ENCODE measurements at regions of chr16 and their contacts with region 1.

Region 1: GRCh38 chr16:17377360-17378324 is 93.1 kb downstream of the XYLT1 start:
- DNase-seq: no peak
- ATAC-seq: peak; percentile 85
- H3K4me3 Mint-ChIP-seq: peak overlapping the region; percentile 56
- H3K27ac Mint-ChIP-seq: peak overlapping the region; percentile 88
- H3K4me1 Mint-ChIP-seq: peaks cover 78% of the 10 kb centered on the region
- H3K27me3 Mint-ChIP-seq: no peaks in the 10 kb centered on the region
- CTCF ChIP-seq: no peak

Region 2: DNA sequence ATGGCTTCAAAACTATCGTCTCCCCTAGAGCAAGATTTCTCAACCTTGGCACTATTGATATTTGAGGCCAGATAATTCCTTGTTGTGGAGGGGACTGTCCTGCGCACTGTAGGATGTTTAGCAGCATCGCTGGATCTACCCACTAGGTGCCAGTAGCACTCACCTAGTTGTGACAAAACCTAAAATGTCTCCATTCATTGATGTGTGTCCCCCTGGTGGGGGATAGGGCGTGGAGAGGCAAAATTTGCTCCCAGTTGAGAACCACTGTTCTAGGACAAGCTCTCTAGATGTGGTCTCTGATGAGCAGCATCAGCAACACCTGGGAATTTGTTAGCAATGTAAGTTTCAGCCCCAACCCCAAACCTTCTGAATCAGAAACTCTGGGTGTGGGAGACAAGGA is 165.8 kb before region 1 on chr16:
- CTCF ChIA-PET with region 1: no interaction called
- POLR2A ChIA-PET with region 1: no interaction called
- intact Hi-C with region 1: loop called (anchors 1 kb)
- DNase-seq: no peak
- ATAC-seq: peak; percentile 34
- H3K4me3 Mint-ChIP-seq: no peak overlapping the region
- H3K27ac Mint-ChIP-seq: no peak overlapping the region
- H3K4me1 Mint-ChIP-seq: peaks cover 10% of the 10 kb centered on the region
- H3K27me3 Mint-ChIP-seq: no peaks in the 10 kb centered on the region
- CTCF ChIP-seq: no peak

Region 3: GRCh38 chr16:17301593-17302135 is 76.0 kb before region 1 on chr16:
- CTCF ChIA-PET with region 1: interaction called, 16 read pairs
- POLR2A ChIA-PET with region 1: interaction called, 29 read pairs
- intact Hi-C with region 1: loop called (anchors 1 kb)
- DNase-seq: peak; percentile 62
- ATAC-seq: peak; percentile 86
- H3K4me3 Mint-ChIP-seq: peak overlapping the region; percentile 58
- H3K27ac Mint-ChIP-seq: peak overlapping the region; percentile 85
- H3K4me1 Mint-ChIP-seq: peaks cover 71% of the 10 kb centered on the region
- H3K27me3 Mint-ChIP-seq: no peaks in the 10 kb centered on the region
- CTCF ChIP-seq: no peak

Region 4: GRCh38 chr16:17395849-17396480 is 18.3 kb after region 1 on chr16:
- CTCF ChIA-PET with region 1: no interaction called
- POLR2A ChIA-PET with region 1: no interaction called
- intact Hi-C with region 1: loop called (anchors 2 kb)
- DNase-seq: no peak
- ATAC-seq: no peak
- H3K4me3 Mint-ChIP-seq: no peak overlapping the region
- H3K27ac Mint-ChIP-seq: no peak overlapping the region
- H3K4me1 Mint-ChIP-seq: peaks cover 33% of the 10 kb centered on the region
- H3K27me3 Mint-ChIP-seq: no peaks in the 10 kb centered on the region
- CTCF ChIP-seq: no peak

Region 5: GRCh38 chr16:17423221-17423620 is 45.6 kb after region 1 on chr16:
- CTCF ChIA-PET with region 1: no interaction called
- POLR2A ChIA-PET with region 1: no interaction called
- intact Hi-C with region 1: no loop called
- DNase-seq: no peak
- ATAC-seq: no peak
- H3K4me3 Mint-ChIP-seq: no peak overlapping the region
- H3K27ac Mint-ChIP-seq: no peak overlapping the region
- H3K4me1 Mint-ChIP-seq: peaks cover 20% of the 10 kb centered on the region
- H3K27me3 Mint-ChIP-seq: no peaks in the 10 kb centered on the region
- CTCF ChIP-seq: no peak

Region 6: GRCh38 chr16:17459530-17460521 is 82.2 kb after region 1 on chr16:
- CTCF ChIA-PET with region 1: no interaction called
- POLR2A ChIA-PET with region 1: interaction called, 8 read pairs
- intact Hi-C with region 1: loop called (anchors 2 kb)
- DNase-seq: peak; percentile 40
- ATAC-seq: peak; percentile 87
- H3K4me3 Mint-ChIP-seq: peak overlapping the region; percentile 77
- H3K27ac Mint-ChIP-seq: peak overlapping the region; percentile 65
- H3K4me1 Mint-ChIP-seq: peaks cover 55% of the 10 kb centered on the region
- H3K27me3 Mint-ChIP-seq: no peaks in the 10 kb centered on the region
- CTCF ChIP-seq: no peak